ENCODE measurements at regions of chr19 and their contacts with region 1.

Region 1: DNA sequence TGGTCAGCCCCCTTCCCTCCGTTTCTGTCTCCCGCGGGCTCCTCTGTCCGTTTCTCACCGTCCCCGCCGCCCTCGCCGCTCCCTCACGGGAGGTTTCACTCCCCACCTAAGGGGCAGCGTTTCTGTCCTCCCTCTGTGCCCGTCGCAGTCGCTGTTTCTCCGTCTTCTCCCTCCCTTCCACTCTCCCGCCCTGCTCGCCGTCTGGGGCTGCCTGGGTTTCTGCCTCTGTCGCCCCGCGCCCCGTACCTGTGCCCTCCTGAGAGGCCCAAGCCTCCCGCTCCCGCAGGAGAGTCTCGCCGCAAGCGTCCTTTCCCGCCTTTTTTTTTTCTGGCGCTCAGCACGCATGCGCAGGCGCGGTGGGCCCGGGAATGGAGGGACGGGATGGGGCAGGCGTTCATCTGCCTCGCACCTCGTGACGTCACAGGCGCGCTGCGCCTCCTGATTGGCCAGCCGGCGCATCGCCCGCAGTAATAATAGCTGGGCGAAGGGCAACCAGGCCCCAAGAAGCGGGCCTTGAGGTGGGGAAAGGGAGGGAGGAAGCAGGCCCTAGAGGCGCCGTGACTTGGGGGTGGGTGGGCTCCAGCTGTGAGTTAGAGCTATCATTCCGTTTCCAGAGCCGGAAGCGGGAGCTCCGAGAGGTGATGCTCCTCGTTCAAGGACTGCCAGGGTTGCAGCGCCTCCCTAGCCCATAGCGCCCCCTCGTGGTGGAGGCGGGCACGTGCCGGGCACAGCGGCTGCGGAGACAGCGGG is 15.4 kb downstream of the SSC5D start:
- H3K4me3 ChIP-seq: peak overlapping the region; percentile 50
- H3K27ac ChIP-seq: peak overlapping the region; percentile 33; the same call in 1 of the 2 replicates
- H3K4me1 ChIP-seq: no peaks in the 10 kb centered on the region
- CTCF ChIP-seq: peak; percentile 97

Region 2: GRCh38 chr19:55160128-55160985 is 343.3 kb before region 1 on chr19:
- CTCF ChIA-PET with region 1: interaction called, 15 read pairs
- POLR2A ChIA-PET with region 1: no interaction called
- H3K4me3 ChIP-seq: no peak overlapping the region
- H3K27ac ChIP-seq: 0 out of 2 replicates have a peak overlapping the region, but pooled peaks have one; percentile 10
- H3K4me1 ChIP-seq: peaks cover 6% of the 10 kb centered on the region
- CTCF ChIP-seq: peak; percentile 94

Region 3: DNA sequence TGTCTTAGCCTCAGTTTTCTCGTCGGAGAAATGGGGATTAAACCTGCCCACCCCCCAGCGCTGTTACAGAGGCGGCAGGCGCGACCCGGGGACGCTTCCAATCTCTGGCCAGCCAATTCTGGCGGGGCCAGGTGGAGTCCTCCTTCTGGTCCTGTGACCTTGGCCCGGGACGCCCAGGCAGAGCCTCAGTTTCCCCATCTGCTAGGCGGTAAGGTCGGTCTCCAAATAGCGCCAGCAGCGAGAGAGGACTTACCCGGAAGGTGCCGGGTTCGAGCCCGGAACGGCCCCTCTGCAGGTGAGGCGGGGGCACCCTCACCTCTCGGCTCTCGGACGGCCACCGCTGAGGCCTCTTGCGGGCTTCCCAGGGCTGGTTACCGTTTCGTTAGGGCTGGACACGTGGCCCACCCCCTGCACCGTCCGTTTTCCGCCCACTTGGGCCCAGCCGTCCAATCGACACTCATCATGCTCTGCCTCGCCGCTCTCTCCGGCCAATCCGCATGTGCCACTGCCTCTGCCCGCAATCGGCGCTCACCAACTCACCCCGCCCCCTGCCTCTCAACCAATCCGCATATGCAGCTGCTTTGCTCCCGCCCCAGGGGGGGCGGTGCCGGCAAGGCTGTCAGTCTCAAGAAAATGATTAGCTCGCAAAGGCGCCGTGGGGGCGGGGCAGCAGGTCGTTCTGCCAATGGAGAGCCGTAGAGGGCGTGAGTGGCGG is 42.3 kb before region 1 on chr19 and contains the start of gene ISOC2:
- CTCF ChIA-PET with region 1: interaction called, 152 read pairs
- POLR2A ChIA-PET with region 1: interaction called, 8 read pairs
- H3K4me3 ChIP-seq: peak within 1 kb of the TSS; percentile 85
- H3K27ac ChIP-seq: peak within 1 kb of the TSS; percentile 56; the same call in 1 of the 2 replicates
- H3K4me1 ChIP-seq: peaks cover 12% of the 10 kb centered on the region
- CTCF ChIP-seq: no peak

Region 4: DNA sequence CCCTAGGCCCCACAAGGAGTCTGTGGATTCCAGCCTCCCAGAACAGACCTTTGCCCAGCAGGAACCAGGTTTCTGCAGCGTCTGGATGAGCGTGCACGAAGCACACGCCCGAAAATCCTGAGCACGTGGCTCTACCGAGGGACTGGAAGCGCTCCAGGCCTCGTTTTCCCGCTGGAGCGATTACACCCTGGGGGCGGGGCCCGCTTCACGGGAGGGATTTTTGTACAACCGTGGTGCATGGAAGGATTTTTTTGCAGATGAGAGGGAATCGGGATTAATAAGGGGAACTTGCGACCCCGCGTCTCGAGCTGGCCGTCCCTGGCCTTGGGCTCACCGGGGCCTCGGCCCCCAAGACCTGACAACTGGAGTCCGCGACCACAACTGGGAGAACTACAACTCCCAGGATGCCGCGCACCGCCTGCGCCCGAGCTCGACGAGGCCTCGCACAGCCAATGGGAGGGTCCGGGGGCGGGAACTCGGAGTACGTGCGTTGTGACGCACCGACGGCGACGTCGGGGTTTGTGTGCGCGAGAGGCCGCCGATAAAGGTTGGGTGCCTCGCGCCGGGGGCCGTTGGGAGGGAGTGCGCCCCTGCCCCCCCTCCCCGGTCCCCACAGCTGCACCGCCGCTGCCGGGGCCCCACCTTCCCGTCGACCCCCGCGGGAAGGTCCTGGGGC is 27.4 kb before region 1 on chr19 and contains the start of gene ZNF628:
- CTCF ChIA-PET with region 1: interaction called, 63 read pairs
- POLR2A ChIA-PET with region 1: interaction called, 13 read pairs
- H3K4me3 ChIP-seq: peak within 1 kb of the TSS; percentile 68
- H3K27ac ChIP-seq: peak within 1 kb of the TSS; percentile 76
- H3K4me1 ChIP-seq: peaks cover 8% of the 10 kb centered on the region; the same call in 1 of the 2 replicates
- CTCF ChIP-seq: no peak

Region 5: DNA sequence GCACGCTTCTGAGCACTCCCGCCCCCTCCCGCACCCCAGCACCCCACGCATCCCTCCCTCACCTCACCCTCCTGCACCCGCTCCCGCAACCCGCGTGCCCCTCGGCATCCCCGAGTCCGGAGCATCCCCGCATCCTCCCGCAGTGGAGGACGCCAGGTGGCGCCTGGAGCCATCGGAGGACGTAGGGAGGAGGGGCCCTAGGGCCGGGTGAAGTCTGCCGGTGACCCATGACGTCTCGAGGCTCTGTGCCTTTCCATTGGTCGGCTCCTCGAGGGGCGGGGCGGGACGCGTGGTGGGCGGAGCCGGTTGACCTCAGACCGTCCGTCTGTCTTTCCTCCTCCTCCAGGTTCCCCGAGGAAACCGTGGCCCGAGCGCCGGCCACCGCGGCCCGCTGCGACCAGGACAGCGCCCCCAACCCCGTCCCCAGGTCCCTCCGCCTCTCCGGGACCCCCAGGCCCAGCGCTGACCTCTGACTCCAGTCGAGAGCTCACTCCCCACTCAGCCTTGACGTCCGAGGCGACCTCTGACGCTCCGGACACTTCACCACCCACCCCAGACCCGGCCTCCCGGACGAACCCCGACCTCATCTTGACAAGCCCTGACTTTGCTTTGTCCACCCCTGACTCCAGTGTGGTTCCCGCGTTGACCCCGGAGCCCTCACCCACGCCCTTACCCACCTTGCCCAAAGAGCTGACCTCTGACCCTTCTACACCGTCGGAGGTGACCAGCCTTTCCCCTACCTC is 13.4 kb after region 1 on chr19:
- CTCF ChIA-PET with region 1: interaction called, 41 read pairs
- POLR2A ChIA-PET with region 1: no interaction called
- H3K4me3 ChIP-seq: peak overlapping the region; percentile 37
- H3K27ac ChIP-seq: no peak overlapping the region
- H3K4me1 ChIP-seq: no peaks in the 10 kb centered on the region
- CTCF ChIP-seq: peak; percentile 97

Region 6: DNA sequence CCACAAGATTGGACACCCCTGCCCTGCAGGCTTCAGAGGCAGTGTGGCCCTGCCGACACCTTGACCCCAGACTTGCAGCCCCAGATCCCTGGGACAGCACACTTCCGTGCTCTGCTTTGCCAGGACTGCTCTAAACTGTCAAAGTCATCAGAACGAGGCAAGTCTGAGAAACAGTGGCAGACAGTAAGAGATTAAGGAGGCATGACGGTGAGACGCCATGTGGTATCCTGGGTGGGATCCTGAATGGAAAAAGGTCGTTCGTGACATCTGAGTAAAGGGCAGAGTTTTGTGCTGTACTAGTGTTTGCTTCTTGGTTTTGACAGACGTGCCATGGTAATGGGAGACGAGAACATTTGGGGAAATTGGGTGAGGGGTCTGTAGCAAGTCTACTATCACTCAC is 63.1 kb after region 1 on chr19:
- CTCF ChIA-PET with region 1: no interaction called
- POLR2A ChIA-PET with region 1: no interaction called
- H3K4me3 ChIP-seq: no peak overlapping the region
- H3K27ac ChIP-seq: no peak overlapping the region
- H3K4me1 ChIP-seq: no peaks in the 10 kb centered on the region
- CTCF ChIP-seq: no peak

Region 7: GRCh38 chr19:55624109-55625003 is 120.7 kb after region 1 on chr19 and contains the start of gene ZNF784:
- CTCF ChIA-PET with region 1: interaction called, 30 read pairs
- POLR2A ChIA-PET with region 1: interaction called, 4 read pairs
- H3K4me3 ChIP-seq: peak within 1 kb of the TSS; percentile 88
- H3K27ac ChIP-seq: peak within 1 kb of the TSS; percentile 87
- H3K4me1 ChIP-seq: peaks cover 5% of the 10 kb centered on the region
- CTCF ChIP-seq: no peak

Measured in HEK293 (cell line).